B cell (primary cell): ENCODE measurements at regions of chr2 and their contacts with region 1.

Region 1: GRCh38 chr2:63692002-63692606 is 103.3 kb downstream of the MDH1 start:
- DNase-seq: peak; percentile 55
- ATAC-seq: no peak
- H3K4me3 ChIP-seq: no peak overlapping the region
- H3K4me3 Mint-ChIP-seq: no peak overlapping the region
- H3K27ac ChIP-seq: no peak overlapping the region
- H3K27ac Mint-ChIP-seq: no peak overlapping the region
- H3K4me1 ChIP-seq: no peaks in the 10 kb centered on the region
- H3K4me1 Mint-ChIP-seq: no peaks in the 10 kb centered on the region
- H3K27me3 ChIP-seq: no peaks in the 10 kb centered on the region
- H3K27me3 Mint-ChIP-seq: no peaks in the 10 kb centered on the region
- CTCF ChIP-seq: peak; percentile 68

Region 2: DNA sequence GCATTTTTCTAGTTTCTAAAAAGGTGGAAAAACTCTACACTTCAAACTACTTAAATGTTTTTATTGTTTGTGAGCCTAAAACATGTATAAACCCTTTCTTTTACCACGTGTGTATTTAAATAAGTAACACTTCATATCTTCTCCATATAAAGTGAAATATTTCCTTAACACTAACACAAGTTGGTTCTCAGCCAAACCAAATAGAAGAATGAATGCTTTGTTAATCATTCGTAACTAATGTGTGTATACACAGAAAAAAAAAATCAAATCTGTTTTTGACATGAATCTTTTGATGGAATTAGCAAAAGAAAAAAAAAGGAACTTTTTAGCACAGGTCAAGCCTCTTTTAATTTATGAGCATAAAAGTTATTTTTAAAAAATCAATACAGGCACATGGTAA is 897.3 kb before region 1 on chr2:
- CTCF ChIA-PET with region 1: no interaction called
- POLR2A ChIA-PET with region 1: no interaction called
- intact Hi-C with region 1: no loop called
- DNase-seq: no peak
- ATAC-seq: no peak
- H3K4me3 ChIP-seq: no peak overlapping the region
- H3K4me3 Mint-ChIP-seq: no peak overlapping the region
- H3K27ac ChIP-seq: no peak overlapping the region
- H3K27ac Mint-ChIP-seq: no peak overlapping the region
- H3K4me1 ChIP-seq: no peaks in the 10 kb centered on the region
- H3K4me1 Mint-ChIP-seq: no peaks in the 10 kb centered on the region
- H3K27me3 ChIP-seq: no peaks in the 10 kb centered on the region
- H3K27me3 Mint-ChIP-seq: no peaks in the 10 kb centered on the region
- CTCF ChIP-seq: no peak

Region 3: DNA sequence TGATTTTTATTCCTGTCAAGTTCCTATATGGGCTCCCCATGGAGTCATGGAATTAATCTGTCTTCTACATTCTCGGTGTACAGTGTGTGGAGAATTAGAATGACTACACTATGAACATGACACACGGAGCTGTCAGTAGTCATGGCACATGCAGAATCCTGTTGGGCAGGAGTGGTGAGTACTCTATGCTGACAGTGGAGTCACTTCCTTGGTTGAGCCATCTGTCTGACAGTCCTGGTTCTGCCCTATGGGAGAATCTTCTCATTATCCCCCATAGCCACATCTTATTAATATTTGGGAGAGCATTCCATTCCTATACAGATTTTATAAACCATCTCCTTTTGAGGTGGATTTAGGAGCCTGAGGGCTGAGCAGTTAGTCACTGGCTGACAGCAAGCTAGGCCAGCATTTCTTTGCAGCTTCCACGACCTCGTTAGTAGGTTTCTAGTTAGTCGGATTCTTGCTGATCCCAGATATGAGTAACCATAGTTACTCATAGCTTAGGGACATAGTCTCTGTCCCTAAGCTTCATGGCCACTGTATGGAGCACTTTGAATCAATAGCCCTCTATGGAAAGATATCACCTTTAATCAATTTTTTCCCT is 12.8 kb before region 1 on chr2:
- CTCF ChIA-PET with region 1: interaction called, 20 read pairs
- POLR2A ChIA-PET with region 1: no interaction called
- intact Hi-C with region 1: no loop called
- DNase-seq: no peak
- ATAC-seq: no peak
- H3K4me3 ChIP-seq: no peak overlapping the region
- H3K4me3 Mint-ChIP-seq: no peak overlapping the region
- H3K27ac ChIP-seq: no peak overlapping the region
- H3K27ac Mint-ChIP-seq: no peak overlapping the region
- H3K4me1 ChIP-seq: no peaks in the 10 kb centered on the region
- H3K4me1 Mint-ChIP-seq: no peaks in the 10 kb centered on the region
- H3K27me3 ChIP-seq: no peaks in the 10 kb centered on the region
- H3K27me3 Mint-ChIP-seq: peaks cover 5% of the 10 kb centered on the region
- CTCF ChIP-seq: no peak

Region 4: DNA sequence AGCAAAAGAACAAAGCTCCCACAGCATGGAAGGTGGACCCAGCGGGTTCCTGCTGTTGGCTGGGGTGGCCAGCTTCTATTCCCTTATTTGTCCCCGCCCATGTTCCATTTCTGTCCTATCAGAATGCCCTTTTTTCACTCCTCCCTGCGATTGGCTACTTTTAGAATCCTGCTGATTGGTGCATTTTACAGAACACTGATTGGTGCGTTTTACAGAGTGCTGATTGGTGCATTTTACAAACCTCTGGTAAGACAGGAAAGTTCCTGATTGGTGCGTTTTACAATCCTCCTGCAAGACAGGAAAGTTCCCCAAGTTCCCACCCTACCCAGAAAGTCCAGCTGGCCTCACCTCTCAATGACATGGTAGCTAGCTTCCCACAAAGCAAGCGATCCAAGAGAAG is 109.4 kb after region 1 on chr2:
- CTCF ChIA-PET with region 1: no interaction called
- POLR2A ChIA-PET with region 1: no interaction called
- intact Hi-C with region 1: no loop called
- DNase-seq: no peak
- ATAC-seq: no peak
- H3K4me3 ChIP-seq: no peak overlapping the region
- H3K4me3 Mint-ChIP-seq: no peak overlapping the region
- H3K27ac ChIP-seq: no peak overlapping the region
- H3K27ac Mint-ChIP-seq: no peak overlapping the region
- H3K4me1 ChIP-seq: no peaks in the 10 kb centered on the region
- H3K4me1 Mint-ChIP-seq: no peaks in the 10 kb centered on the region
- H3K27me3 ChIP-seq: no peaks in the 10 kb centered on the region
- H3K27me3 Mint-ChIP-seq: no peaks in the 10 kb centered on the region
- CTCF ChIP-seq: no peak

Region 5: GRCh38 chr2:63888490-63889402 is 196.6 kb after region 1 on chr2:
- CTCF ChIA-PET with region 1: interaction called, 5 read pairs
- POLR2A ChIA-PET with region 1: no interaction called
- intact Hi-C with region 1: loop called (anchors 1 kb)
- DNase-seq: peak; percentile 51
- ATAC-seq: peak; percentile 54
- H3K4me3 ChIP-seq: no peak overlapping the region
- H3K4me3 Mint-ChIP-seq: no peak overlapping the region
- H3K27ac ChIP-seq: no peak overlapping the region
- H3K27ac Mint-ChIP-seq: no peak overlapping the region
- H3K4me1 ChIP-seq: no peaks in the 10 kb centered on the region
- H3K4me1 Mint-ChIP-seq: no peaks in the 10 kb centered on the region
- H3K27me3 ChIP-seq: no peaks in the 10 kb centered on the region
- H3K27me3 Mint-ChIP-seq: no peaks in the 10 kb centered on the region
- CTCF ChIP-seq: peak; percentile 71